GM18951 (cell line): ENCODE measurements at regions of chr3 and their contacts with region 1.

Region 1: GRCh38 chr3:120816728-120817127 is 74.2 kb downstream of the GTF2E1 start:
- POLR2A ChIP-seq: no peak

Region 2: GRCh38 chr3:120417272-120417911 is 399.3 kb before region 1 on chr3:
- in situ Hi-C with region 1: loop called (anchors 25 kb)
- POLR2A ChIP-seq: no peak